A549 (cell line): ENCODE measurements at regions of chrX and their contacts with region 1.

Region 1: GRCh38 chrX:10189317-10190268 is 32.8 kb downstream of the CLCN4 start:
- DNase-seq: peak; percentile 70 to 77
- ATAC-seq: peak; percentile 93 to 97
- H3K4me3 ChIP-seq: 0 out of 3 replicates have a peak overlapping the region, but pooled peaks have one; percentile 15
- H3K27ac ChIP-seq: peak overlapping the region; percentile 58 to 80
- H3K4me1 ChIP-seq: peaks cover 14% of the 10 kb centered on the region
- CTCF ChIP-seq: peak; percentile 78
- EP300 ChIP-seq: no peak
- POLR2A ChIP-seq: no peak
- RAD21 ChIP-seq: peak; percentile 89 to 90

Region 2: DNA sequence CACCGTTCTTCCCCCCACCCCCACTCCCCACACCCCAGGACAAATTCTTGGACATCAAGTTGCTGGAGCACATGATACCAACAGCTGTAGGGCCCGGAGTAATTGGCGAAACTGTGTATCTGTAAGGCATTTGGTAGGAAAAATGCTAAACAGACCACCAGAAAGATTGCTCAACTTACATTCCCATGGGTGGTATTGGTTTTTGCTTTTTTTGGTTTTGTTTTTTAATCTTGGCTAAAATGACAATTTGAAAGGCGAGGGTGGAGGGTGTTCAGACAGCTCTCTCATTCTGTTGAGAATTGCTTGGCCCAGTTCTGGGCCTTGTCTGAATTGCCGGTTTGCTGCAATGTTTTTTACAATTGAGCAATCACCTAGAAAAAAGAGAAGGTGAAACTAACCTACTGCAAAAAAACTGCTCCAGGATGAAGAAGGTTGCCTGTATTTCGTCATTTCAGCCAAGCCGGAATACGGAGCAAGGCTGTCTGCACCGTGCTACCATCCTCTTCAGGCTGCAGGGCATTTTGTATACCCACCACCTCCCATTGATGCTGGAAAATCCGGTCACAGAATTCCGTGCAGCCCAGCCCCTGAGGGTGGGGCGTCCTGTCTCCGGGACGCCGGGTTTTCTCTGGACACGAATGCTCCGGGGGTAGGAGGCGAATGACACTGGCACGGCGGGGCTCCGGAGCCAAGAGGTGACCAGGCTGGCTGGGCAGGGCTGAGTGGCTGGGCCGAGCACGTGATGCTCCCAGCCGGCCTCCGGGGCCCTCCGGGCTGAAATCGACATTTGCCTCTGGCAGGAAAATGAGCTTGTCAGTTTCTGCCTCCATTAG is 33.2 kb before region 1 on chrX and contains the start of gene CLCN4:
- CTCF ChIA-PET with region 1: no interaction called
- POLR2A ChIA-PET with region 1: no interaction called
- DNase-seq: peak; percentile 47 to 59
- ATAC-seq: peak; percentile 91 to 97
- H3K4me3 ChIP-seq: peak within 1 kb of the TSS; percentile 41
- H3K27ac ChIP-seq: peak within 1 kb of the TSS; percentile 62 to 79
- H3K4me1 ChIP-seq: peaks cover 14% of the 10 kb centered on the region; the same call in 2 of the 3 replicates
- CTCF ChIP-seq: no peak
- EP300 ChIP-seq: no peak
- POLR2A ChIP-seq: no peak
- RAD21 ChIP-seq: no peak
- polyA plus RNA-seq, gene CLCN4: 4.4 and 4.7 TPM in 2 replicates

Region 3: DNA sequence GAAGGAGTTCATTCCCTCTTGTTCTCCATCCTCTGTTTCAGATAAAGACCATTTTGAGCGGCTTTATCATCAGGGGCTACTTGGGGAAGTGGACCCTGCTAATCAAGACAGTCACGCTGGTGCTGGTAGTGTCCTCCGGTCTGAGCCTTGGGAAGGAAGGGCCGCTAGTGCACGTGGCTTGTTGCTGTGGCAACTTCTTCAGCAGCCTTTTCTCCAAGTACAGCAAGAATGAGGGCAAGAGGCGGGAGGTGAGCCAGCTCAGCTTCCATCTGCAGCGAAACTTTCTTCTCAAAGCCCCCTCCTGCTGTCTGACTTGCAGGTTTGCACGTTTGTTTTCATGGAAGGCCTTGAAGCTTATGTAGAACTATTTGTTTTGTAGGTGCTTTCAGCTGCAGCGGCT is 16.7 kb after region 1 on chrX:
- CTCF ChIA-PET with region 1: interaction called, 29 read pairs
- POLR2A ChIA-PET with region 1: no interaction called
- DNase-seq: no peak
- ATAC-seq: no peak
- H3K4me3 ChIP-seq: no peak overlapping the region
- H3K27ac ChIP-seq: no peak overlapping the region
- H3K4me1 ChIP-seq: no peaks in the 10 kb centered on the region
- CTCF ChIP-seq: no peak
- EP300 ChIP-seq: no peak
- POLR2A ChIP-seq: no peak
- RAD21 ChIP-seq: no peak

Region 4: GRCh38 chrX:10327651-10328050 is 138.1 kb after region 1 on chrX:
- CTCF ChIA-PET with region 1: interaction called, 11 read pairs
- POLR2A ChIA-PET with region 1: no interaction called
- DNase-seq: peak; percentile 24 to 66
- ATAC-seq: peak; percentile 84 to 87
- H3K4me3 ChIP-seq: no peak overlapping the region
- H3K27ac ChIP-seq: peak overlapping the region; percentile 72 to 77
- H3K4me1 ChIP-seq: peaks cover 36% of the 10 kb centered on the region
- CTCF ChIP-seq: no peak
- EP300 ChIP-seq: peak in 1 of 2 experiments; percentile 32; a peak in 1 of 5 replicates
- POLR2A ChIP-seq: no peak
- RAD21 ChIP-seq: no peak

Region 5: GRCh38 chrX:10636337-10636736 is 446.7 kb after region 1 on chrX:
- CTCF ChIA-PET with region 1: interaction called, 95 read pairs
- POLR2A ChIA-PET with region 1: interaction called, 7 read pairs
- DNase-seq: peak; percentile 71 to 81
- ATAC-seq: peak; percentile 48 to 73; a peak in 3 of 6 replicates
- H3K4me3 ChIP-seq: no peak overlapping the region
- H3K27ac ChIP-seq: peak overlapping the region; percentile 72 to 87
- H3K4me1 ChIP-seq: peaks cover 39% of the 10 kb centered on the region
- CTCF ChIP-seq: peak; percentile 90
- EP300 ChIP-seq: no peak
- POLR2A ChIP-seq: no peak
- RAD21 ChIP-seq: peak; percentile 94 to 98

Region 6: DNA sequence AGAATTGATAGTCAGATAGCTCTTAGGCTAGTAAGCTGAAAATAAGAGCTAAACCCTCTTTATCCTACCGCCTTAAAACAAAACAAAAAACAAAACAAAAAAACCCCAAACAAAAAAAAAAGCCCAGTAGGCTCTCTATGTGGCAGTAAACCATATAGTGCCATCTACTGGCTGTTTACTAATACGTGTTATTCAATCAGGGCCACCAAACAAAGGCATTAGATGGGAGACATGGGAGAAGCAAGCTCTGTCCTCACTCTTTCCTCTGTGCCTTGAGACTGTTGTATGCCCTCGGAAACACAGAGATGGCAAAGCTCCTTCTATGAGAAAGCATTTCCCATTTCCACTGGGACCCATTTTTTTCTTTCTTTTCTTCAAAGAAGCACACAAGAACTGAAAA is 579.6 kb after region 1 on chrX:
- CTCF ChIA-PET with region 1: interaction called, 10 read pairs
- POLR2A ChIA-PET with region 1: no interaction called
- DNase-seq: peak; percentile 32 to 46
- ATAC-seq: peak; percentile 82 to 94
- H3K4me3 ChIP-seq: no peak overlapping the region
- H3K27ac ChIP-seq: no peak overlapping the region; a peak in 1 of 6 replicates
- H3K4me1 ChIP-seq: peaks cover 18% of the 10 kb centered on the region
- CTCF ChIP-seq: peak; percentile 61
- EP300 ChIP-seq: no peak
- POLR2A ChIP-seq: no peak
- RAD21 ChIP-seq: peak; percentile 46 to 60; a peak in 4 of 5 replicates